ENCODE measurements at regions of chr5 and their contacts with region 1.

Region 1: DNA sequence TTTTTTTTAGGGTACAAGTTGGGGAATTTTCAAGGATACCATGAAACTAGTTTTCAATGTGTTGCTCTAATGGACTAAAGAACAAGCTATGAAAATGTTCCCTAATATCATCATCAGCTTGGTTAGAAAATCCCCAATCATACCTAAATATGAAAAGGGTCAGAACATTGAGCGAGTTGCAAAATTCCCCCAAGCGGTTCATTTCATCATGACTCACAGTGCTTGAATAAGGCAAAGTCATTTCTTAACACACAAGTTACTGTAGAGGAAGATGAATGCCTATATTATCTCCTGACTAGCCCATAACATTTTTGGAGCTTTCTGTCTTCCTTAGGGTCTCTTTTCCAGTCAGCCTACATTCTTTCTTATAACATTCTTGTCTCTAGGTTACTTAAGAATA is 62.7 kb downstream of the ST8SIA4 start:
- DNase-seq: peak; percentile 76
- H3K4me3 Mint-ChIP-seq: peak overlapping the region; percentile 74
- H3K27ac Mint-ChIP-seq: peak overlapping the region; percentile 95
- H3K4me1 Mint-ChIP-seq: peaks cover 51% of the 10 kb centered on the region
- H3K27me3 Mint-ChIP-seq: no peaks in the 10 kb centered on the region

Region 2: GRCh38 chr5:100535060-100536005 is 305.1 kb before region 1 on chr5 and contains the start of gene FAM174A:
- intact Hi-C with region 1: loop called (anchors 10 kb)
- DNase-seq: peak; percentile 98
- H3K4me3 Mint-ChIP-seq: peak within 1 kb of the TSS; percentile 98
- H3K27ac Mint-ChIP-seq: peak within 1 kb of the TSS; percentile 88
- H3K4me1 Mint-ChIP-seq: peaks cover 19% of the 10 kb centered on the region
- H3K27me3 Mint-ChIP-seq: peaks cover 10% of the 10 kb centered on the region
- total RNA-seq, gene FAM174A: 8.1 and 10.0 TPM in 2 replicates

Region 3: GRCh38 chr5:100777680-100778281 is 62.6 kb before region 1 on chr5:
- intact Hi-C with region 1: loop called (anchors 1 kb)
- DNase-seq: peak; percentile 63
- H3K4me3 Mint-ChIP-seq: peak overlapping the region; percentile 19
- H3K27ac Mint-ChIP-seq: peak overlapping the region; percentile 49
- H3K4me1 Mint-ChIP-seq: peaks cover 46% of the 10 kb centered on the region
- H3K27me3 Mint-ChIP-seq: no peaks in the 10 kb centered on the region

Region 4: GRCh38 chr5:100827481-100827889 is 12.9 kb before region 1 on chr5:
- intact Hi-C with region 1: loop called (anchors 1 kb)
- DNase-seq: no peak
- H3K4me3 Mint-ChIP-seq: no peak overlapping the region
- H3K27ac Mint-ChIP-seq: peak overlapping the region; percentile 45
- H3K4me1 Mint-ChIP-seq: peaks cover 30% of the 10 kb centered on the region
- H3K27me3 Mint-ChIP-seq: no peaks in the 10 kb centered on the region

Region 5: DNA sequence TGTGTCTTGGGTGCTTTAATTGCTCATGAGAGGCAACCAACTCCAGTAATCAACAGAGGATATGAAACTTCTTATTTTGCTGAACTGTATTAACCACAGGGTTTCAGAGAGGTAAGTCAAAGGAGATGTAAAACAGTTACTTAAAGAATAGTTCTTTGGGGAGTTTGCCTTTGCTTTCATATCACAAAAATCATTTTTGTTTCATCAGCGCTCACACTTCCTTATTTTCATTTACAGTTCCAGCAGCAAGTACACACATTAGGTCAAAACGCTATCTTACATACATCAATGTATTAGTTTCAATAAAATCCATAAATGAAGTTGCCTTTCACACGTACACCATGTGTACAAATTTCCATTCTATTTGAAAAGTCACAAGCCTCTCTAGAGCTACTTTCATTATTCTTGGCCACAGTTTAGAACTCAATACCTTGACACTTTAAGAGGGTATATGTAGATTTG is 12.6 kb after region 1 on chr5:
- intact Hi-C with region 1: loop called (anchors 1 kb)
- DNase-seq: no peak
- H3K4me3 Mint-ChIP-seq: peak overlapping the region; percentile 73
- H3K27ac Mint-ChIP-seq: peak overlapping the region; percentile 89
- H3K4me1 Mint-ChIP-seq: peaks cover 31% of the 10 kb centered on the region
- H3K27me3 Mint-ChIP-seq: no peaks in the 10 kb centered on the region

Region 6: GRCh38 chr5:100860407-100860806 is 20.0 kb after region 1 on chr5:
- intact Hi-C with region 1: loop called (anchors 1 kb)
- DNase-seq: no peak
- H3K4me3 Mint-ChIP-seq: peak overlapping the region; percentile 27
- H3K27ac Mint-ChIP-seq: peak overlapping the region; percentile 88
- H3K4me1 Mint-ChIP-seq: peaks cover 44% of the 10 kb centered on the region
- H3K27me3 Mint-ChIP-seq: no peaks in the 10 kb centered on the region

Measured in activated CD4-positive, alpha-beta T cell treated with anti-CD3 and anti-CD28 coated beads, Interleukin-2, amount 10 ng/mL, durations not matched to agents 24 days and 14 days (primary cell).